H1 (cell line): ENCODE measurements at regions of chr9 and their contacts with region 1.

Region 1: DNA sequence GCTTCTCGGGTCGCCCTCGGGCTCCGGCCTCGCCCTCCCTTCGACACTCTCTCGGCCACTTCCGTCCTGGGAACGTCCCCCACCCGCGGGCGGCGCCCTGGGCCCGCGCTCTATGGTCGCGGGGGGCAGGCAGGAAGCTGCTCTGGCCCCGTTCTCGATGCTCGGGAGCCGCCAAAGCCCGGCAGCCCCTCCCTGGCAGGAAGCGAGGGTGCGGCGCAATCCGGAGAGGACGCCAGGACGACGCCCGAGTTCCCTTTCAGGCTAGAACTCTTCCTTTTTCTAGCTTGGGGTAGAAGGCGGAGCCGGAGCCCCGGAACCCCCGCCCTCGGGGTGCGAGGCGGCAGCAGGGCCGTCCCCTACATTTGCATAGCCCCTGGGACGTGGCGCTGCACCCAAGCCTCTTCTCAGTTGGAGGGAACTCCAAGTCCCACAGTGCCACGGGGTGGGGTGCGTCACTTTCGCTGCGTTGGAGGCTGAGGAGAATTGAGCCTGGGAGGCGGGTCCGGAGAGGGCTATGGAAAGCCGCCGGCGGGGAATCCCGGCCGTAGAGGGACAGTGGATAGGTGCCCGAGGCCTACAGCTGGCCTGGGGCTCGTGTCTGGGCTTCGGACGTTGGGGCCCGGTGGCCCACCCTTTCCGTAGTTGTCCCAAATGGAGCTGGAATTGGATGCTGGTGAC is at the starts of genes CREB3 and TLN1:
- DNase-seq: peak; percentile 90 to 94
- H3K4me3 ChIP-seq: peak within 1 kb of the TSS; percentile 79 to 96 (median 90)
- H3K27ac ChIP-seq: peak within 1 kb of the TSS; percentile 55
- H3K4me1 ChIP-seq: peaks cover 21 to 42% (median 26%) of the 10 kb centered on the region in 4 experiments
- H3K27me3 ChIP-seq: no peaks in the 10 kb centered on the region
- CTCF ChIP-seq: 0 out of 4 replicates have a peak, but pooled peaks of 1 of the 3 experiments have one; percentile 11
- EP300 ChIP-seq: 0 out of 3 replicates have a peak, but pooled peaks of 1 of the 2 experiments have one; percentile 7
- POLR2A ChIP-seq: peak; percentile 76 to 77
- RAD21 ChIP-seq: no peak
- total RNA-seq, gene CREB3: 24.4 and 26.5 TPM in 2 replicates
- total RNA-seq, gene TLN1: 87.9 and 90.1 TPM in 2 replicates

Region 2: DNA sequence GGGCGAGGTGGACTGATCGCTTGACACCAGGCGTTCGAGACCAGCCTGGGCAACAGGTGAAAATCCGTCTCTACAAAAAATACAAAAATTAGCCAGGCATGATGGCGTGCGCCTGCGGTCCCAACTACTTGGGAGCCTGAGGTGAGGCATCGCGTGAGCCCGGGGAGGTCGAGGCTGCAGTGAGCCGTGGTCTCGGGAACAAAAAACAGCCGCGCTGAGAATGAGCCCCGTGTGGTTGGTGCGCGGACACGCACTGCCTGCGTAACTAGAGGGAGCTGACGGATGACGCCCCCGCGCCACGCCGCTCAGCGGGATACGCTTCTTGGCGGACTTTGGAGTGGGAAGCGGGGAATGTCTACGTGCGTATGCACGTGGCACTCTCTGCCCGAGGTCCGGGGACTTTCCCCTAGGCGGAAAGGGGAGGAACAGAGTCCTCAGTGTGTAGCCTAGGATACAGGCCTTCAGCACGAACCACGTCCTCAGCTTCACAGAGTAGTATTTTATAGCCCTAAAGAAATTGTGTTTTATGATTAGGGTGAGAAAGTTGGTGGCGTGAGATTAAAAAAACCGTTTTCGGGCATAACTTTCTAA is 74.6 kb before region 1 on chr9 and contains the start of gene RMRP:
- CTCF ChIA-PET with region 1: interaction called, 170 read pairs
- POLR2A ChIA-PET with region 1: interaction called, 6 read pairs
- DNase-seq: peak; percentile 96 to 98
- H3K4me3 ChIP-seq: peak within 1 kb of the TSS; percentile 70 to 92 (median 86)
- H3K27ac ChIP-seq: peak within 1 kb of the TSS; percentile 99
- H3K4me1 ChIP-seq: peaks cover 0 to 2% (median 0%) of the 10 kb centered on the region in 4 experiments; a peak in 4 of 7 replicates
- H3K27me3 ChIP-seq: peaks cover 0 to 7% (median 0%) of the 10 kb centered on the region in 4 experiments; a peak in 1 of 7 replicates
- CTCF ChIP-seq: peak in 2 of 3 experiments; percentile 4 to 8; a peak in 1 of 4 replicates
- EP300 ChIP-seq: peak in 1 of 2 experiments; percentile 91; a peak in 1 of 3 replicates
- POLR2A ChIP-seq: peak in 1 of 2 experiments; percentile 32; a peak in 2 of 3 replicates
- RAD21 ChIP-seq: peak in 1 of 2 experiments; percentile 7; a peak in 2 of 4 replicates
- total RNA-seq, gene RMRP: 14,987 and 16,528 TPM in 2 replicates

Region 3: GRCh38 chr9:35675732-35676392 is 56.4 kb before region 1 on chr9:
- CTCF ChIA-PET with region 1: interaction called, 20 read pairs
- POLR2A ChIA-PET with region 1: interaction called, 5 read pairs
- DNase-seq: peak in 1 of 2 experiments; percentile 98
- H3K4me3 ChIP-seq: peak overlapping the region; percentile 55 to 69 (median 60)
- H3K27ac ChIP-seq: no peak overlapping the region
- H3K4me1 ChIP-seq: peaks cover 0 to 15% (median 3%) of the 10 kb centered on the region in 4 experiments; a peak in 5 of 7 replicates
- H3K27me3 ChIP-seq: peaks cover 0 to 3% (median 3%) of the 10 kb centered on the region in 4 experiments; a peak in 4 of 7 replicates
- CTCF ChIP-seq: no peak
- EP300 ChIP-seq: no peak
- POLR2A ChIP-seq: peak; percentile 43 to 55; a peak in 2 of 3 replicates
- RAD21 ChIP-seq: no peak

Region 4: DNA sequence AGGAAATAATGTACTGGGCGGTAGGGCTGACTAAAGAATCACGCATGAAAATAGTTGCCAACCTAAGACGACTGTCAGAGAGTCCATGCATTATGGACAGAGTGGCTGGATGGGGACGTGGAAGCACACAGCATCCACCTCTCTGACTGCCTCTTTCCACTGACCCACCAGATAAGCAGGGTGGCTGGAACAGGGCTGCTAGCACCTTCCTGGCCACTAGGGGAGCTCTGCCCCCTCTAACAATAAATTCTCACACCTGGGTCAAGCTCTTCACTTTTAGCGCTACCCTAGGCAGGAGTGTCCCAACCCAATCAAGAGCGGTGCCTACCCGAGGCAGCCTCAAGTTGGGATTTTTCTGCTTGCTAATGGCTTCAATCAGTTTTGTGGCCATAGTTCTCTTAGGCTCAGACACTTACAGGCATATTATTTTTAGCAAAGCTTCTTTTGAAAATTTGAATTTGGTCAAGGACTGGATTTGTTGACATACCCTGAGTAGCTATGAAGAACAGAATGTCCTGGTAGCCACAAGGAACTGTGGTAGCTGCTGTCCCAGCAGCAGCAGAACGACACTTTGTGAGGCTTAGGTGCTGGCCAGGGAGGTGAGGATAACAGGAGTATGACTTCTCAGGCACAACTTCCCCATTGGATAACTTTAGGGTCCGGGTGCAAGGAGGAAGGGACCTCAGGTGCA is 35.6 kb before region 1 on chr9:
- CTCF ChIA-PET with region 1: interaction called, 95 read pairs
- POLR2A ChIA-PET with region 1: interaction called, 158 read pairs
- DNase-seq: peak in 1 of 2 experiments; percentile 84
- H3K4me3 ChIP-seq: no peak overlapping the region
- H3K27ac ChIP-seq: no peak overlapping the region
- H3K4me1 ChIP-seq: no peaks in the 10 kb centered on the region
- H3K27me3 ChIP-seq: no peaks in the 10 kb centered on the region
- CTCF ChIP-seq: peak; percentile 85 to 97 (median 95)
- EP300 ChIP-seq: no peak
- POLR2A ChIP-seq: no peak
- RAD21 ChIP-seq: peak; percentile 65 to 70

Region 5: DNA sequence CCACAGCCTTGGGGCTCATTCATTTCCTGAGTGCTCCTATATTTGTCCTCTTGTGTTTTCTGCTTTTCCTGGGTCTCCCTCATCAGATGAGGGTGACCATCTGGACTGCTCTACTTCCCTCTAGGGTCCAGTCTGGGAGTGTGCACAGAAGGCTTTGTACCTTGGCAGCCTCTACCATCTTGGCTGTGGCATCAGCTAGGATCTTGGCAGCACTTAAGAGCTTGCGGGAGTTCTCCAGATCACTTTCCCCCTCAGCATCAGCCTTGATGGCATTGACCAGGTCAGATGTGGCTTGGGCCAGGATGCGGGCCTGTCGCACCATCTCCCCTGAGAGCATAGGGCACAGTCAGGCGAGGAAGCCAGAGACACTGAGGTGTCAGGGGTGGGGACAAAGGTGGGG is 16.0 kb before region 1 on chr9:
- CTCF ChIA-PET with region 1: interaction called, 198 read pairs
- POLR2A ChIA-PET with region 1: interaction called, 51 read pairs
- DNase-seq: no peak
- H3K4me3 ChIP-seq: no peak overlapping the region
- H3K27ac ChIP-seq: no peak overlapping the region
- H3K4me1 ChIP-seq: no peaks in the 10 kb centered on the region
- H3K27me3 ChIP-seq: no peaks in the 10 kb centered on the region
- CTCF ChIP-seq: peak in 1 of 3 experiments; percentile 4; a peak in 1 of 4 replicates
- EP300 ChIP-seq: no peak
- POLR2A ChIP-seq: no peak
- RAD21 ChIP-seq: no peak

Region 6: GRCh38 chr9:35756275-35757225 is 24.3 kb after region 1 on chr9:
- CTCF ChIA-PET with region 1: interaction called, 27 read pairs
- POLR2A ChIA-PET with region 1: interaction called, 9 read pairs
- DNase-seq: peak; percentile 38 to 87
- H3K4me3 ChIP-seq: peak overlapping the region; percentile 85 to 92 (median 90)
- H3K27ac ChIP-seq: peak overlapping the region; percentile 81
- H3K4me1 ChIP-seq: peaks cover 0 to 5% (median 0%) of the 10 kb centered on the region in 4 experiments; a peak in 2 of 7 replicates
- H3K27me3 ChIP-seq: no peaks in the 10 kb centered on the region
- CTCF ChIP-seq: peak; percentile 56 to 79 (median 75)
- EP300 ChIP-seq: peak in 1 of 2 experiments; percentile 17; a peak in 1 of 3 replicates
- POLR2A ChIP-seq: peak in 1 of 2 experiments; percentile 71; a peak in 1 of 3 replicates
- RAD21 ChIP-seq: peak; percentile 28 to 42

Region 7: GRCh38 chr9:35814841-35815543 is 82.7 kb after region 1 on chr9 and contains the start of gene HINT2:
- CTCF ChIA-PET with region 1: interaction called, 6 read pairs
- POLR2A ChIA-PET with region 1: interaction called, 12 read pairs
- DNase-seq: peak; percentile 93 to 96
- H3K4me3 ChIP-seq: peak within 1 kb of the TSS; percentile 72 to 98 (median 80)
- H3K27ac ChIP-seq: peak within 1 kb of the TSS; percentile 85
- H3K4me1 ChIP-seq: peaks cover 0 to 7% (median 4%) of the 10 kb centered on the region in 4 experiments; a peak in 6 of 7 replicates
- H3K27me3 ChIP-seq: peaks cover 0 to 3% (median 2%) of the 10 kb centered on the region in 4 experiments; a peak in 1 of 7 replicates
- CTCF ChIP-seq: no peak
- EP300 ChIP-seq: no peak
- POLR2A ChIP-seq: peak; percentile 7 to 79; a peak in 2 of 3 replicates
- RAD21 ChIP-seq: no peak
- total RNA-seq, gene HINT2: 32.1 and 34.8 TPM in 2 replicates

Region 8: DNA sequence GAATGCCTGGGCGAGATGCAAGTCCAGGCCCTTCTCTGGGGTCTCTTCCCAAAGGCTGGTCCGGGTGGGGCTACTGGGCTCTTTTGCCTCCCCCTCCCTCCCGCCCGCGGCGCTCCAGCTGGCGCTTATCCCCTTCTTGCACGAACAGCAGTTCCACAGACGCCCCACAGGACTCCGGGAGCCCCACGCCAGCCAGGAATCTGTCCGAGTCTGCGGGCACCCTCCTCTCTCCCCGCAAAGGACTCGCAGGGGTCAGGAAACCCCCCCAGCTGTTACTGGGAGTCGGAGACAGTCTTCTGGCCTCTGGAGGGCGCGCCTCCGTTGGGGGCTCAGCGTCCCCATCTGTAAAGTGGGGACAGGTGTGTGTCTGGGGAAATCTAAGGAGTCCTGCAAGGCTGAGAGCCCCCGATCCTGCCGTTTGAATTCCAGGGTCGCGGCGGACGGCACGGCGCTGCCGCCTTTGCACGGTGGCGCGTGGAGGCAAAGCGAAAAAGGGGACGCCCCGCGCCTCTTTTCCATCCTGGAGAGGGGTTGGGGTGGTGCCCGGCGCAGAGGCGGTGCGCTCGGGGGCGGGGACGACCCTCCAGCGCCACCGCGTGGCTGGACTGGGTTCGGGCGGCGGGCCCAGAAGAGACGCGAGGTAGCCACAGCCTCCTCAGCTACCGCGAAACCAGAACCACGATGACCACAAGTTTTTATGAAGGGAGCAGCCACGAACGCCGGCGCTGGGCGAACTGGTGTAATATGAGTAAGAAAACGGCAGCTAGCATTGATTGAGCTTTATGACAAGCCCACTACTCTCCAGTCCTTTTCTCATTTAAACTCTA is 434.1 kb after region 1 on chr9:
- CTCF ChIA-PET with region 1: no interaction called
- POLR2A ChIA-PET with region 1: no interaction called
- DNase-seq: peak; percentile 25 to 96
- H3K4me3 ChIP-seq: peak overlapping the region; percentile 29 to 62 (median 39)
- H3K27ac ChIP-seq: no peak overlapping the region
- H3K4me1 ChIP-seq: peaks cover 11 to 25% (median 17%) of the 10 kb centered on the region in 4 experiments
- H3K27me3 ChIP-seq: no peaks in the 10 kb centered on the region
- CTCF ChIP-seq: peak; percentile 68 to 91 (median 84)
- EP300 ChIP-seq: no peak; a peak in 1 of 3 replicates
- POLR2A ChIP-seq: no peak
- RAD21 ChIP-seq: peak; percentile 85